AG04450 (cell line): ENCODE measurements at regions of chr7 and their contacts with region 1.

Region 1: GRCh38 chr7:141785706-141786552 is 4.1 kb upstream of the TAS2R5 start:
- DNase-seq: peak; percentile 16
- H3K4me3 ChIP-seq: no peak overlapping the region
- H3K27ac ChIP-seq: no peak overlapping the region
- H3K27me3 ChIP-seq: no peaks in the 10 kb centered on the region
- CTCF ChIP-seq: peak; percentile 85

Region 2: DNA sequence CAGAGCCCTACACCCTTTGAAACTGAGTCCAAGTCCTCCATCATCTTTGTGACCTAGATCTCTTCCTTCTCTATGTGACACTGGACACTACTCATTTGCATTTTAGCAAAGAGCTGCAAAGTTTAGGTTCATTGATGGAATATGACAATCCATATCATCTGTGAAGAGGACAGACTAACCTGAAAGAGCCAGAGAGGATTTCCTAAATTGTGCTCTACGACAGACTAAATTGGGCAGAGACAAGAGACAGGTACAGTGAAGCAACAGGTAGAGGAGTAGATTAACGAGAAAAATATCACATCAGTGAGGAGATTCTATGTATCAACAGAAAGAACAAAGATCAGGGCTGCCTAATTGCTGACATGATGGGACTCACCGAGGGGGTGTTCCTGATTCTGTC is 22.1 kb before region 1 on chr7 and contains the start of gene TAS2R3:
- CTCF ChIA-PET with region 1: interaction called, 10 read pairs
- POLR2A ChIA-PET with region 1: no interaction called
- DNase-seq: no peak
- H3K4me3 ChIP-seq: no peak within 1 kb of the TSS
- H3K27ac ChIP-seq: no peak within 1 kb of the TSS
- H3K27me3 ChIP-seq: no peaks in the 10 kb centered on the region
- CTCF ChIP-seq: no peak
- polyA plus RNA-seq, gene TAS2R3: 0.19 and 0.21 TPM in 2 replicates

Region 3: GRCh38 chr7:142134909-142135308 is 349.0 kb after region 1 on chr7:
- CTCF ChIA-PET with region 1: no interaction called
- POLR2A ChIA-PET with region 1: no interaction called
- DNase-seq: no peak
- H3K4me3 ChIP-seq: no peak overlapping the region
- H3K27ac ChIP-seq: no peak overlapping the region
- H3K27me3 ChIP-seq: no peaks in the 10 kb centered on the region
- CTCF ChIP-seq: no peak

Region 4: GRCh38 chr7:142796608-142797385 is 1010.9 kb after region 1 on chr7:
- CTCF ChIA-PET with region 1: no interaction called
- POLR2A ChIA-PET with region 1: no interaction called
- DNase-seq: no peak
- H3K4me3 ChIP-seq: no peak overlapping the region
- H3K27ac ChIP-seq: no peak overlapping the region
- H3K27me3 ChIP-seq: peaks cover 56% of the 10 kb centered on the region
- CTCF ChIP-seq: no peak